ENCODE measurements at regions of chr21 and their contacts with region 1.

Region 1: GRCh38 chr21:37937668-37938067 is 21.4 kb upstream of the KCNJ6 start:
- DNase-seq: no peak
- ATAC-seq: no peak
- H3K4me3 Mint-ChIP-seq: no peak overlapping the region
- H3K27ac Mint-ChIP-seq: no peak overlapping the region
- H3K4me1 Mint-ChIP-seq: no peaks in the 10 kb centered on the region
- H3K27me3 Mint-ChIP-seq: peaks cover 4% of the 10 kb centered on the region; the same call in 1 of the 2 replicates
- CTCF ChIP-seq: no peak

Region 2: DNA sequence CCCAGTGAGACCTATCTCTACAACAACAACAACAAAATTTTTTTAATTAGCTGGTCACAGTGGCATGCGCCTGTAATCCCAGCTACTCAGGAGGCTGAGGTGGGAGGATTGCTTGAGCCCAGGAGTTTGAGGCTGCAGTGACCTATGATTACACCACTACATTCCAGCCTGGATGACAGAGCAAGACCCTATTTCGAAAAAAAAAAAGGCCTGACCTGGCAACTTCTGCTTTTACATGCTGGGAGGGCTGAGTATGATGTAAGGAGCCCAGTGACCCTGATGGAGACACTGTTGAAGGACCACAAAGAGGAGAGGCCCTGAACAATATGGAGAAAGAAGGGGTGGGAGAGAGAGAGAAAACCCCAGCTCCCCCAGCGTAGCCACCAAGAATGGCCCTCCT is 661.3 kb before region 1 on chr21:
- CTCF ChIA-PET with region 1: no interaction called
- POLR2A ChIA-PET with region 1: interaction called, 10 read pairs
- DNase-seq: no peak
- ATAC-seq: no peak
- H3K4me3 Mint-ChIP-seq: no peak overlapping the region
- H3K27ac Mint-ChIP-seq: no peak overlapping the region
- H3K4me1 Mint-ChIP-seq: peaks cover 14% of the 10 kb centered on the region
- H3K27me3 Mint-ChIP-seq: no peaks in the 10 kb centered on the region
- CTCF ChIP-seq: no peak

Region 3: DNA sequence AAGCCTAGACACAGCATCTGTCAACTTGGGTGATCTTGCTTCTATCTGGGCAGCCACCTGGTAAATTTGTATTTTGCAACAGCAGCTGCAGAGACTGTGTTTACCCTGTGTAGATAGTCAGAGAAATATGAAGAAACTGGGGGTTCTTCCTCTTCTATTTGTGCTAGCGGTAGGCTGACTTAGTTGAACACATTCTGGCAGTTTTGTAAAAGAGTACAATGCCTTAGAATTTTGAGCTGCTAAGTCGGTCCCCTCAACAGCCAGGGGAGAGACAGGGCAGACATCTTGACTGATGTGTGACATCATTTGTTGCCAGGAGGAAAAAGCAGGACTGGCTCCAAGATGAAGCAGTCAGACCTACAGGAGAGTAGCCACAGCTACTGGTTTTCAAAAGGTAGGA is 75.1 kb before region 1 on chr21:
- CTCF ChIA-PET with region 1: no interaction called
- POLR2A ChIA-PET with region 1: no interaction called
- DNase-seq: no peak
- ATAC-seq: peak; percentile 77
- H3K4me3 Mint-ChIP-seq: no peak overlapping the region
- H3K27ac Mint-ChIP-seq: no peak overlapping the region
- H3K4me1 Mint-ChIP-seq: no peaks in the 10 kb centered on the region
- H3K27me3 Mint-ChIP-seq: no peaks in the 10 kb centered on the region
- CTCF ChIP-seq: no peak

Measured in WTC11 (cell line).